CD14-positive monocyte (primary cell): ENCODE measurements at regions of chr17 and their contacts with region 1.

Region 1: GRCh38 chr17:29617125-29617480 is 5.6 kb downstream of the CORO6 start:
- DNase-seq: peak; percentile 67 to 84 (median 81)
- H3K4me3 ChIP-seq: peak overlapping the region in 2 of 3 experiments; percentile 31 to 80
- H3K4me3 Mint-ChIP-seq: peak overlapping the region; percentile 83 to 92
- H3K27ac ChIP-seq: no peak overlapping the region
- H3K27ac Mint-ChIP-seq: no peak overlapping the region
- H3K4me1 ChIP-seq: peaks cover 57 to 63% of the 10 kb centered on the region in 2 donors
- H3K4me1 Mint-ChIP-seq: peaks cover 49% of the 10 kb centered on the region
- H3K27me3 ChIP-seq: peaks cover 7 to 80% of the 10 kb centered on the region in 2 donors
- H3K27me3 Mint-ChIP-seq: peaks cover 47 to 91% (median 63%) of the 10 kb centered on the region in 3 donors
- CTCF ChIP-seq: peak; percentile 60

Region 2: GRCh38 chr17:29568331-29569244 is 48.5 kb before region 1 on chr17 and contains the start of gene TP53I13:
- intact Hi-C with region 1: loop called in 1 of 2 experiments (anchors 10 kb)
- DNase-seq: peak; percentile 45 to 51 (median 47)
- H3K4me3 ChIP-seq: peak within 1 kb of the TSS; percentile 76 to 97 (median 87)
- H3K4me3 Mint-ChIP-seq: peak within 1 kb of the TSS; percentile 95 to 97
- H3K27ac ChIP-seq: peak within 1 kb of the TSS; percentile 64 to 70
- H3K27ac Mint-ChIP-seq: peak within 1 kb of the TSS; percentile 75 to 95 (median 91)
- H3K4me1 ChIP-seq: peaks cover 32 to 45% of the 10 kb centered on the region in 2 donors
- H3K4me1 Mint-ChIP-seq: peaks cover 40% of the 10 kb centered on the region
- H3K27me3 ChIP-seq: no peaks in the 10 kb centered on the region
- H3K27me3 Mint-ChIP-seq: peaks cover 0 to 7% (median 2%) of the 10 kb centered on the region in 3 donors
- CTCF ChIP-seq: no peak
- polyA plus RNA-seq, gene TP53I13: 9.4 to 58.6 (median 14.4) TPM

Region 3: DNA sequence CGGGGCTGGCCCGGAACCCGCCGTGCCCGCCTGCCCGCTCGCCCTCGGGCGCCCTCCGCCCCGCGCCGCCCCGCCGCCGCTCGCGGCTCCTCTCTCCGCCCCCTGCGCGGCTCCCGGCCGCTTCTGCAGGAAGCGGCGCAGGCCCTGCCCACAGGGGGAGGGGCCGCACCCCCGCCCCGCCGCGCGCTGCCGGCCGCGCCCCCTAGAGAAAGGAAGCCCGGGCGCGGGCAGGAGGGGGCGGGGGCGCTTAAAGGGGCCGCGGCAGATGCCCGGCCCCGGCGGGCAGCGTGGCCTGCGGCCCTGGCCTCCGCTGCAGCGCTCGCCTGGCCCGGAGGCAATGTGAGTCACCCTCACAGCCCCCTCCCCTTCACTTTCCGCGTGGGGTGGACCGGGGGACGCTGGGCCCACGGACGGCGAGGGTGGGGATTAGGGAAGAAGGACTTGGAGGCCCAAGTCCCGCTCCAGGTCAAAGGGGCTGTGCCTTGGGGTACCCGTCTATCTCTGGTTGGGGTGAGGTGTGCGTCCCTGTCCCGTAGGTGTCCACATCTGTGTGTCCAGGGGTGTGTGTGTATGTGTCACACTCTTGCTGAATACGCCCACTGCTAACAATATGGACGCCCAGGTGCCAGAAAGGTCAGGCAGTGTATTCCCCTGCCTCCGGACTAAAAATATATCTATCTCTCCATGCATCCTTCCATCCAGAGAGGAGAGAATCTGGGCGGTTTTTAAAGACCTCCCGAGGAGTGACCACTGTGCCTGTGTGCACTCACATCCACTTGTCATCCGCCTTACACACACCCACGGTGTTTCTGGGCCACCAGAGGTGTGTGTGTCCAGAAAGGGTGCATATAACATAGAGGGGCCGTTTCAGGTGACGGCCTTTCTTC is 27.3 kb before region 1 on chr17 and contains the start of gene GIT1:
- intact Hi-C with region 1: loop called (anchors 1 to 2 kb)
- DNase-seq: peak; percentile 63 to 77 (median 71)
- H3K4me3 ChIP-seq: peak within 1 kb of the TSS; percentile 68 to 88 (median 73)
- H3K4me3 Mint-ChIP-seq: peak within 1 kb of the TSS; percentile 91 to 93
- H3K27ac ChIP-seq: peak within 1 kb of the TSS; percentile 20 to 38
- H3K27ac Mint-ChIP-seq: peak within 1 kb of the TSS in 6 of 7 donors; percentile 46 to 88 (median 56)
- H3K4me1 ChIP-seq: peaks cover 80 to 85% of the 10 kb centered on the region in 2 donors
- H3K4me1 Mint-ChIP-seq: peaks cover 80% of the 10 kb centered on the region
- H3K27me3 ChIP-seq: peaks cover 2 to 27% of the 10 kb centered on the region in 2 donors
- H3K27me3 Mint-ChIP-seq: peaks cover 21 to 38% (median 26%) of the 10 kb centered on the region in 3 donors
- CTCF ChIP-seq: no peak
- polyA plus RNA-seq, gene GIT1: 3.1 to 41.7 (median 4.4) TPM